Naive thymus-derived CD4-positive, alpha-beta T cell (primary cell): ENCODE measurements at regions of chr22 and their contacts with region 1.

Region 1: GRCh38 chr22:46122511-46122971 is 27.8 kb upstream of the PPARA start:
- DNase-seq: peak; percentile 34 to 80 (median 57)
- ATAC-seq: peak; percentile 79
- H3K4me3 ChIP-seq: no peak overlapping the region
- H3K4me3 Mint-ChIP-seq: no peak overlapping the region
- H3K27ac ChIP-seq: no peak overlapping the region
- H3K27ac Mint-ChIP-seq: no peak overlapping the region
- H3K4me1 ChIP-seq: no peaks in the 10 kb centered on the region
- H3K4me1 Mint-ChIP-seq: no peaks in the 10 kb centered on the region
- H3K27me3 ChIP-seq: no peaks in the 10 kb centered on the region
- H3K27me3 Mint-ChIP-seq: no peaks in the 10 kb centered on the region

Region 2: GRCh38 chr22:46309526-46310085 is 187.1 kb after region 1 on chr22:
- CTCF ChIA-PET with region 1: interaction called, 40 read pairs
- POLR2A ChIA-PET with region 1: no interaction called
- intact Hi-C with region 1: loop called in 1 of 2 experiments (anchors 1 kb)
- DNase-seq: no peak
- ATAC-seq: no peak
- H3K4me3 ChIP-seq: no peak overlapping the region
- H3K4me3 Mint-ChIP-seq: no peak overlapping the region
- H3K27ac ChIP-seq: no peak overlapping the region
- H3K27ac Mint-ChIP-seq: peak overlapping the region in 1 of 9 donors; percentile 86
- H3K4me1 ChIP-seq: no peaks in the 10 kb centered on the region
- H3K4me1 Mint-ChIP-seq: peaks cover 0 to 13% (median 0%) of the 10 kb centered on the region in 7 donors
- H3K27me3 ChIP-seq: no peaks in the 10 kb centered on the region
- H3K27me3 Mint-ChIP-seq: no peaks in the 10 kb centered on the region

Region 3: DNA sequence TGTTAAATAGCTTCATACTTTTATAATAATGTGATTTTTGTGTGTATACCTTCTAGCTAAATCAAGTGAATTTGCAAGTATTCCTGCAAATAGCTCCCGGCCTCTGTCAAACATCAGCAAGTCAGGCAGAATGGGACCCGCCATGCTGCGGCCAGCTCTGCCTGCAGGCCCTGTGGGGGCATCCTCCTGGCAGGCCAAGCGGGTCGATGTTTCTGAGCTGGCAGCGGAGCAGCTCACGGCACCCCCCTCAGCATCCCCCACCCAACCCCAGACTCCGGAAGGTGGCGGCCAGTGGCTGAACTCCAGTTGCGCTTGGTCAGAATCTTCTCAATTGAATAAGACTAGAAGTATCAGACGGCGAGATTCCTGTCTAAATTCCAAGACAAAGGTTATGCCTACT is 193.4 kb after region 1 on chr22:
- CTCF ChIA-PET with region 1: interaction called, 40 read pairs
- POLR2A ChIA-PET with region 1: no interaction called
- intact Hi-C with region 1: loop called in 1 of 2 experiments (anchors 1 kb)
- DNase-seq: no peak
- ATAC-seq: no peak
- H3K4me3 ChIP-seq: no peak overlapping the region
- H3K4me3 Mint-ChIP-seq: no peak overlapping the region
- H3K27ac ChIP-seq: no peak overlapping the region
- H3K27ac Mint-ChIP-seq: no peak overlapping the region
- H3K4me1 ChIP-seq: no peaks in the 10 kb centered on the region
- H3K4me1 Mint-ChIP-seq: peaks cover 0 to 2% (median 0%) of the 10 kb centered on the region in 7 donors
- H3K27me3 ChIP-seq: no peaks in the 10 kb centered on the region
- H3K27me3 Mint-ChIP-seq: no peaks in the 10 kb centered on the region

Region 4: DNA sequence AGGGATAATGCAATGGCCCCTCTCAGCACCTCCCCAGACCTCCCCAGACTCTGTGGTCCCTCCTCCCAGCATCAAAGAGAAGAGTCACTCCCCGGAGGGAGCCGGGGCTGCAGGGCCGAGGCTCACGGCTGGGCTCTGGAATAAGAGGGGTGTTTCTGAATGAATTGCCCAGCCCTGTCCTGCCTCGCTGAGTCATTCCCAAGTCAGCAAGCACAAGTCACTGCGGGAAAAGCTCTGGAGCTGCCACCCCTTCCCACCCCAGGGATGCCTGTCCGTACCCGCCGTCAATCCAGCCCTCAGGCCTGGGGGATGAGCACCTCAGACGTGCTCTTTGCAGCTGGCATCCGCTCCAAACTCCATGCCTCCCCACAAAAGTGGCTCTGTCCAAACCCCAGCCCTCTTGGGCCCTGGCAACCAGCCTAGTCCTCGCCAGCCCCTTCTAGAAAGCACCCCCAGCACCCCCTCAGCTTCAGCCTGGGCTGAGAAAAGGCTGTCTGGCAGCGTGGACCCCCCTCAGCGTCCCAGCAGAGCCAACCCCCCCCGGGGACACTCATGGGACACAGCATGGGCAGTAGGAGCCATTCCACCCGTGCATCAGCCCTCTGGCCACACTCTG is 392.2 kb after region 1 on chr22:
- CTCF ChIA-PET with region 1: no interaction called
- POLR2A ChIA-PET with region 1: no interaction called
- intact Hi-C with region 1: no loop called
- DNase-seq: no peak
- ATAC-seq: no peak
- H3K4me3 ChIP-seq: no peak overlapping the region
- H3K4me3 Mint-ChIP-seq: no peak overlapping the region
- H3K27ac ChIP-seq: no peak overlapping the region
- H3K27ac Mint-ChIP-seq: no peak overlapping the region
- H3K4me1 ChIP-seq: no peaks in the 10 kb centered on the region
- H3K4me1 Mint-ChIP-seq: peaks cover 0 to 2% (median 0%) of the 10 kb centered on the region in 7 donors
- H3K27me3 ChIP-seq: no peaks in the 10 kb centered on the region
- H3K27me3 Mint-ChIP-seq: no peaks in the 10 kb centered on the region